Thyroid gland (tissue), 4 donors: ENCODE measurements at regions of chr11 and their contacts with region 1.

Region 1: DNA sequence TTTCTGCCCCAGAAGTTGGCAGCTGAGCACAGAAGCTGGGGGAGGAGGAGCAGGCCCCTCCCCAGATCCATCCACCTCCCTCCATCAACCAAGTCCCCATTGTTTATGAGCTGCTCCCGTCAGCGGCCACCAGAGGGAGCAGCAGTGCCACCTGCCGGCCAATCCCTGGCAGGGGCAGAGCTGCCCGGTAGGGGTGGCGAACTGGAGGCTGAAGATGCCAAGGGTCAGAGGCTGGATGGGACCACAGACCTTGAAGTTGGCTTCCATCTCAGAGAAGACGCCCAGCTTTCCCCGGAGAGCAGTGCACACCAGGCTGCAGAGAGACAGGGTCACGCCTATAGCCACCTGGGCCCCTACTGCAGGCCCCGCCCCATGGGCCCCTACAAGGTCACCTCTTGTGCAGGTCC is 3.6 kb downstream of the FIBP start:
- DNase-seq: peak; percentile 74 to 79
- H3K4me3 ChIP-seq: no peak overlapping the region
- H3K27ac ChIP-seq: no peak overlapping the region
- H3K4me1 ChIP-seq: peaks cover 19 to 20% of the 10 kb centered on the region in 2 donors
- H3K27me3 ChIP-seq: no peaks in the 10 kb centered on the region
- CTCF ChIP-seq: peak; percentile 93 to 99 (median 98)
- POLR2A ChIP-seq: no peak

Region 2: DNA sequence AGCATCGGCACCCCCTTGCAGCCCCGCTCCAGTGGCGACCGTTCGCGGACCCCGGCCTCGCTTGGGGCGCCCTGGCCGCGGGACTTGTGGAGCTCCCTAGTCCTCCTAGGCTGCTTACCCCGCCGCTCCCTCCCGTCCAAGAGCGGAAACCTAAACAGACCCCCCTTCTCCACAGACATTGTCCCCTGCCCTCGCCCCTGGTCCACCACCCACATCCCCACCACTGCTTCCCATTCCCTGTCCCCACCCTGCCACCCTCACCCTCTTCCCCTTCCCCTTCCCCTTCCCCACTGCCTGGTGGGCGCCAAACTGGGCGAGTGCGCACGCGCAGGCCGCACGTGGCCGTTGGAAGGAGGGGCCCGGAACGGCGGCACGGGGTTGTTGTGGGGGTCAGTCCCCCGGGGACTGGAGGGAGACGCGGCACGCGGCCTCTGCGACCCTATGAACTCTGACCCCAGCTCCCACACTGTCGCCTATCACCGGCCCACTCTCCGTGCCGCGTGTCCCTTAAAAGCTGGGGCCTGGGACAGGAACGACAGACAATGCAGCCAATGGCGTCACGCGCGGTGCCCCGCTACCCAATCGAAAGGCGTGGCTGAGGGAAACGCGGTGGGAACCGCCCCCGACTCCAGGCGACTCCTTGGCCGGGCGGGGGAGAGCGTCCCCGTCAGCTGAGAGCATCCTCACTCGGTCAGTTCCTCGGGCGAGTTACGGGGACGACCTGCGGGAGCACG is 51.2 kb before region 1 on chr11 and contains the start of gene SNX32:
- intact Hi-C with region 1: no loop called
- DNase-seq: peak; percentile 95 to 96
- H3K4me3 ChIP-seq: peak within 1 kb of the TSS; percentile 27 to 45 (median 38)
- H3K27ac ChIP-seq: no peak within 1 kb of the TSS
- H3K4me1 ChIP-seq: peaks cover 0 to 8% of the 10 kb centered on the region in 2 donors
- H3K27me3 ChIP-seq: no peaks in the 10 kb centered on the region
- CTCF ChIP-seq: no peak
- POLR2A ChIP-seq: no peak
- total RNA-seq, gene SNX32: 0.45 TPM in 1 of 4 donors, not detected in the others

Region 3: GRCh38 chr11:65927904-65928397 is 43.3 kb after region 1 on chr11:
- intact Hi-C with region 1: no loop called
- DNase-seq: peak in 1 of 2 donors; percentile 41
- H3K4me3 ChIP-seq: no peak overlapping the region
- H3K27ac ChIP-seq: peak overlapping the region in 1 of 3 donors; percentile 2
- H3K4me1 ChIP-seq: peaks cover 19 to 20% of the 10 kb centered on the region in 2 donors
- H3K27me3 ChIP-seq: no peaks in the 10 kb centered on the region
- CTCF ChIP-seq: no peak
- POLR2A ChIP-seq: no peak

Region 4: DNA sequence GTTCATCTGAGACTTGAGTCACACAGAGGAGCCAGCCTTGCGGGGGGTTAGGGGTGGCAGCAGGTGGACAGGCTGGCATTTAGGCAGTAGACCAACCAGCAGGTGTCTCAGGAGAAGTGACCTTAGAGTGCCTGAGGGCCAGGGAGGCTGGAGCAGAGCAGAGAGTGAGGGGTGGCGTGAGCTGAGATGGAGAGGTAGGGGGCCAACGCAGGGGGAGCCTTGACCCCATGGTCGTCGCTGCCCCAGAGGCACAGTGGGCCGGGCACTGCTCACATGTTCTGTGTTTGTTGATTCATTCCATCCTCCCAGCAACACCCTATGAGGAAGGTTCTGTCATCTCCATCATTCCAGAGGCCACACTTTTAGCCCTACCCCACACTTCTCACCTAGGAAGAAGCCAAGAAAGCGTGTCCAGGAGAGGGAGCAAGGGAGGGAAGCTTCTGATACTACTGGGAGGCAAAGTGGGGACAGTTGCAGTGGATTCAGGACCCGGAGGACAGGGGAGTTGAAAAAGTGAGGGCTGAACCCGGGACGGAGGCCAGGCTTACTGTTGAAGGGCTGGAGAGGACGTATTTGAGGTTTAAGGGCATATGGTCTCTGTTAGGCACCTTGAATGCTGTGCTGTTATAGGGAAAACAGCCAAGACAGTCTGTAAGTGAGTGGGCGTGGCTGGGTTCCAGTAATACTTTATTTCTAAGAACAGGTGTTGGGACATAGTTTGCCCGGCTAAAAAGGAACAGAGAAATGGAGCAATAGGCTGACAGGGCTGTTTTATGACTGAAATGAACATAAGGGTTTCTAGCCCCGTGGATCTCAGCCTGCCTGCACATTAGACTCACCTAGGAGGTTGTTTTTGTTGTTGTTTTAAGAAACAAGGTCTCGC is 84.2 kb after region 1 on chr11:
- intact Hi-C with region 1: loop called (anchors 5 kb)
- DNase-seq: no peak
- H3K4me3 ChIP-seq: no peak overlapping the region
- H3K27ac ChIP-seq: no peak overlapping the region
- H3K4me1 ChIP-seq: peaks cover 0 to 9% of the 10 kb centered on the region in 2 donors
- H3K27me3 ChIP-seq: no peaks in the 10 kb centered on the region
- CTCF ChIP-seq: no peak
- POLR2A ChIP-seq: no peak

Region 5: DNA sequence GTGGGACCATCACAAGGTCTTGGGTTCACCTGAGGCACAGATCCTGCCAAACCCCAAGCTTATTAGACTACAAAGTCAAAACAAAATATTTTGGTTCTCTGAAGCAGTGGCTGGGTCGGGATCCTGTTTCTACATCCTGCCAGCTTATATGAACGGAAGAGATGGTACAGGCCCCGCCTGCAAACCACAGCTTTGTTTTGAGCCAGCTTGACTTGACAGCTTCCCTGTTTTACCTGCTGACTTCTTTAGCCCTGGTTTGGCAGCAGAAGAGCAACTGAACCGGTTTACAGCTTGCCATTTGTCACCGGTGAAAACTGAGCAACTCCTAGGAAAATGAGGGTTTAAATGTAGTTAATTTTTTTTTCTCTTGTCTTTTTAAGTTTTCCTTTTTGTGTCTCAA is 196.8 kb after region 1 on chr11:
- intact Hi-C with region 1: no loop called
- DNase-seq: peak; percentile 43 to 53
- H3K4me3 ChIP-seq: no peak overlapping the region
- H3K27ac ChIP-seq: peak overlapping the region; percentile 6 to 48 (median 34)
- H3K4me1 ChIP-seq: peaks cover 45 to 56% of the 10 kb centered on the region in 2 donors
- H3K27me3 ChIP-seq: no peaks in the 10 kb centered on the region
- CTCF ChIP-seq: no peak
- POLR2A ChIP-seq: no peak